Endothelial cell of umbilical vein (primary cell): ENCODE measurements at regions of chr2 and their contacts with region 1.

Region 1: GRCh38 chr2:240615820-240616547 is 9.3 kb upstream of the GPR35 start:
- DNase-seq: no peak
- H3K4me3 ChIP-seq: no peak overlapping the region
- H3K27ac ChIP-seq: no peak overlapping the region
- H3K4me1 ChIP-seq: no peaks in the 10 kb centered on the region
- H3K27me3 ChIP-seq: no peaks in the 10 kb centered on the region
- CTCF ChIP-seq: no peak
- POLR2A ChIP-seq: no peak

Region 2: DNA sequence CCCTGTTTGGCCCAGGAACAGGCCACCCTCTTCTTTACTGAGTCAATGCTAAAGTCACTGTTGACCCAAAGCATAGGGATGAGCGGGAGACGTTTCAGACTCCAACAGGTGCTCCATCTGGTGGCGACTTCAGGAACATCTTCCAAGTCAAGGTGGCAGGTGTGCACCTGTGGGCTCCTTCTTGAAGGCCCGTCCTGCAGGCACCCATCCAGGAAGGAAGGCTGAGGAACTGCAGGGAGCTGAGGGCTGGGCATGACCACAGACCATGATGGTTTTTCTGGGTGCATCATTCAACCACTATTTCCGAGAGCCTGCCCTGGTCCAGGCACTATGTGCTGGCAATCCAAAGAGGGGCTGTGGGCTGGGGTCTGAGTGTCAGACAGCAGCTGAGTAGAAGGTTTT is 733.7 kb before region 1 on chr2:
- CTCF ChIA-PET with region 1: no interaction called
- POLR2A ChIA-PET with region 1: no interaction called
- dilution Hi-C with region 1: no loop called
- intact Hi-C with region 1: no loop called
- DNase-seq: peak; percentile 14
- H3K4me3 ChIP-seq: no peak overlapping the region
- H3K27ac ChIP-seq: peak overlapping the region; percentile 72
- H3K4me1 ChIP-seq: peaks cover 17% of the 10 kb centered on the region
- H3K27me3 ChIP-seq: no peaks in the 10 kb centered on the region
- CTCF ChIP-seq: peak; percentile 29 to 32
- POLR2A ChIP-seq: no peak

Region 3: GRCh38 chr2:240586198-240586918 is 29.6 kb before region 1 on chr2 and contains the start of gene CAPN10:
- CTCF ChIA-PET with region 1: no interaction called
- POLR2A ChIA-PET with region 1: no interaction called
- dilution Hi-C with region 1: no loop called
- intact Hi-C with region 1: no loop called
- DNase-seq: peak; percentile 95
- H3K4me3 ChIP-seq: peak within 1 kb of the TSS; percentile 76 to 84 (median 84)
- H3K27ac ChIP-seq: peak within 1 kb of the TSS; percentile 74
- H3K4me1 ChIP-seq: peaks cover 17% of the 10 kb centered on the region
- H3K27me3 ChIP-seq: no peaks in the 10 kb centered on the region
- CTCF ChIP-seq: no peak
- POLR2A ChIP-seq: peak; percentile 66
- total RNA-seq, gene CAPN10: 37.9 and 39.9 TPM in 2 replicates

Region 4: DNA sequence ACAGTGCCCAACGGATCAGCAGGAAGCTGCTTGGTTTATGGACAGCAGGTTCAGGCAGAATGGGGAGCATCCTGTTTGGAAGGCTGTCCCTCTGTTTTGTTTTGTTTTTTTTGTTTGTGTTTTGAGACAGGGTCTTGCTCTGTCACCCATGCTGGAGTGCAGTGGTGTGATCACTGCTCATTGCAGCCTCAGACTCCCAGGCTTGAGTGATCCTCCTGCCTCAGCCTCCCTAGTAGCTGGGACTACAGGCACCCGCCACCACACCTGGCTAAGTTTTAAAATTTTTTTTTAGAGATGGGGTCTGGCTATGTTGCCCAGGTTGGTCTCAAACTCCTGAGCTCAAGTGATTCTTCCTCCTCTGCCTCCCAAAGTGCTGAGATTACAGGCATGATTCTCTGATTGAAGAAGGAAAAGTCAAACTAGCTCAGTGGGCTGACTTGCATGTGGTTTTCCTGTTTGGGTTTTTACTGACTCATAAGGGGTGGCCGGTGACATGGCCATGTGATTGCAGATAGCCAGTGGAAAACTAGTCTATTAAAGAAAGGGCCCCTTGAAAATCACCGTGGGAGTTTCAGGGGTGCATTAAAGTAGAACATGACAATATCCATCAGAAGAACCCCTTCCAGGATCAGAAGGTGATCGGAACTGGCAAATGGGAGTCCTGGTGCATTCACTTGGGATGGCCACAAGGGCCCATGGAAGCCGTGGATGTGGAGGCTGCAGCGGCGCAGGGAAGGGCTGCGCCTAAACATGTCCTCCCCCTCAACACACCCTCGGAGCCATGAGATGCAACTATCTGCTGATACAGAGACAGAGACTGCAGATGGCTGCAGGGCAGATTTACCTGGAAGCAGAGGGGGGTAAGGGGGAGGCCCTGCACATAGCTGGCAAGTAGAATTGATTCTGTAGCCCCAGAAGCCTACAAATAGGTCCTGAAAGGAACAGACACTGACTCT is 40.2 kb after region 1 on chr2:
- CTCF ChIA-PET with region 1: no interaction called
- POLR2A ChIA-PET with region 1: no interaction called
- dilution Hi-C with region 1: no loop called
- intact Hi-C with region 1: loop called (anchors 5 kb)
- DNase-seq: no peak
- H3K4me3 ChIP-seq: no peak overlapping the region
- H3K27ac ChIP-seq: no peak overlapping the region
- H3K4me1 ChIP-seq: no peaks in the 10 kb centered on the region
- H3K27me3 ChIP-seq: peaks cover 0 to 2% of the 10 kb centered on the region in 2 experiments
- CTCF ChIP-seq: no peak
- POLR2A ChIP-seq: no peak